ENCODE measurements at regions of chr6 and their contacts with region 1.

Region 1: DNA sequence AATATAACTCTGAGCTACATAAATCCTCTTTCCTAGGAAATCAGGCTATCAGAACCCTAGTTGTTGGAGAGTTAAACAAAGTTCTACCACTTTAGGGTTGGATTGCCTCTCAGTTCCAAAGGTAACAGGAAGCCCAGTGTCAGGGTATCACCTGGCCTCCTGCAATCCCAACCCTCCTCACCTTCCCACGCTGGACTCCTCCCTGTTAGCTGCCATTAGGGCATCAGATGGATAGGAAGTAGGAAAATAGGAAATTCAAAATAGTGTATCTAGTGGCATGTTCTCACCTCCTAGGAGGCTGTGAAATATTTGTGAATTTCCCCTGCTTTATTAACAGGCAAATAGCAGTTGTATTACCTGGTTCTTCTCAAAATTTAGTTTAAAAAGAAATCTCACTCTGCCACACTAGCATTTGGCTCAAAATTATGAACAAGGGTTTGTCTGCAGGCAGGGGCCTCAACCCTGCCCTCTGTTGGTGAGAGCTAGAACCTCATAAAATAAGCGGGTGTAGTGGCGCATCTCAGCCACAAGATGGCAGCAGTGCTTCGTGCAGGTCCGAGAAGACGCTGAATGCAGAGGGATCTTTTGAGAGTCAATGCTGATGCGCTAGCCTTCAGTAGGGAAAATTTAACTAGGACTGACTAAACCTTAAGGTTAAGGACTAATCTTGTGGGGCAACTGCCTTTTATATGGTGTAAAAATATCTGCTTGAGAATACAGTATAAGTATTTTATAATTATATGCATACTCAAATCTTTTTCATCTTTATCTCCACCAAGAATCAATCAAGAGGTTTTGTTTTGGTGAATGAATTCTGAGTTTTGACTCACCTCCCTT is 209.8 kb upstream of the KCNQ5 start:
- DNase-seq: peak; percentile 46 to 83 (median 71)
- ATAC-seq: peak; percentile 68 to 81
- H3K4me3 ChIP-seq: no peak overlapping the region
- H3K27ac ChIP-seq: no peak overlapping the region
- H3K4me1 ChIP-seq: no peaks in the 10 kb centered on the region
- H3K27me3 ChIP-seq: no peaks in the 10 kb centered on the region

Region 2: GRCh38 chr6:73180763-73181619 is 768.9 kb after region 1 on chr6:
- intact Hi-C with region 1: loop called in 2 of 4 experiments (anchors 2 to 5 kb)
- DNase-seq: peak in 2 of 3 donors; percentile 55 to 64
- ATAC-seq: peak; percentile 84 to 88
- H3K4me3 ChIP-seq: peak overlapping the region; percentile 39
- H3K27ac ChIP-seq: no peak overlapping the region
- H3K4me1 ChIP-seq: no peaks in the 10 kb centered on the region
- H3K27me3 ChIP-seq: no peaks in the 10 kb centered on the region

Region 3: DNA sequence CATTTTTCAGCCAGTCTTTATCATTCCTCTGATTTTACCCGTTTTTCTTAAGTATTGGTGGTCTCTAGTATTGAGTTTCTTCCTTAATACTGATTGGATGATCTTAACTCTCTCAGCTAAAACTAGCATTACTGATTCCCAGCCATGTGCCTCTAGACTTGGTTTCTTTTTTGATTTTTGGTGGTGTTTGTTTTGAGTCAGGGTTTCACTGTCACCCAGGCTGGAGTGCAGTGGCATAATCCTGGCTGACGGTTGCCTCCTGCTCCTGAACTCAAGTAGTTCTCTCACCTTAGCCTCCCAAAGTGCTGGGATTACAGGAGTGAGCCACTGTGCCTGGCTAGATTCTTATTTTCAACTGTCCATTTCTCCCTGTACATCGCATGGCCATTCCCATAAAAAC is 917.1 kb after region 1 on chr6:
- intact Hi-C with region 1: loop called in 1 of 4 experiments (anchors 10 kb)
- DNase-seq: no peak
- ATAC-seq: no peak
- H3K4me3 ChIP-seq: no peak overlapping the region
- H3K27ac ChIP-seq: no peak overlapping the region
- H3K4me1 ChIP-seq: no peaks in the 10 kb centered on the region
- H3K27me3 ChIP-seq: no peaks in the 10 kb centered on the region